PC-3 (cell line): ENCODE measurements at regions of chr10 and their contacts with region 1.

Region 1: DNA sequence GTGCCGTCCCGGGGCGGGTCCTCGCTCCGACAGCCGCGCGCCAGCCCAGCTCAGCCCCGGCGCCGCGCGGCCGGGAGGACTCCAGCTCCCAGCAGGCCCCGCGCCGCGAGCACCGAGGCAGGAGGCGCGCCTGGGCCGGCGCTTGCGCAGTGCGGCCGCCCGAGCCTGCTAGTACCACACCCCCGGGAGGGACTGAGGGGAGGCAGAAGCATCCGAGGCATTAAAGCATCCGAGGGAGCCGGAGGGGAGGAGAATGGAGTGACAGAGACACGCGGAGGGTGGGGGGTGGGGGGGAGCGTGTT is at the start of gene GRK5:
- DNase-seq: peak; percentile 93
- ATAC-seq: peak; percentile 77
- H3K4me3 ChIP-seq: peak within 1 kb of the TSS; percentile 78
- H3K27ac ChIP-seq: peak within 1 kb of the TSS; percentile 56
- H3K4me1 ChIP-seq: peaks cover 43% of the 10 kb centered on the region
- H3K27me3 ChIP-seq: no peaks in the 10 kb centered on the region
- CTCF ChIP-seq: no peak
- total RNA-seq, gene GRK5: 4.5 and 5.0 TPM in 2 replicates

Region 2: DNA sequence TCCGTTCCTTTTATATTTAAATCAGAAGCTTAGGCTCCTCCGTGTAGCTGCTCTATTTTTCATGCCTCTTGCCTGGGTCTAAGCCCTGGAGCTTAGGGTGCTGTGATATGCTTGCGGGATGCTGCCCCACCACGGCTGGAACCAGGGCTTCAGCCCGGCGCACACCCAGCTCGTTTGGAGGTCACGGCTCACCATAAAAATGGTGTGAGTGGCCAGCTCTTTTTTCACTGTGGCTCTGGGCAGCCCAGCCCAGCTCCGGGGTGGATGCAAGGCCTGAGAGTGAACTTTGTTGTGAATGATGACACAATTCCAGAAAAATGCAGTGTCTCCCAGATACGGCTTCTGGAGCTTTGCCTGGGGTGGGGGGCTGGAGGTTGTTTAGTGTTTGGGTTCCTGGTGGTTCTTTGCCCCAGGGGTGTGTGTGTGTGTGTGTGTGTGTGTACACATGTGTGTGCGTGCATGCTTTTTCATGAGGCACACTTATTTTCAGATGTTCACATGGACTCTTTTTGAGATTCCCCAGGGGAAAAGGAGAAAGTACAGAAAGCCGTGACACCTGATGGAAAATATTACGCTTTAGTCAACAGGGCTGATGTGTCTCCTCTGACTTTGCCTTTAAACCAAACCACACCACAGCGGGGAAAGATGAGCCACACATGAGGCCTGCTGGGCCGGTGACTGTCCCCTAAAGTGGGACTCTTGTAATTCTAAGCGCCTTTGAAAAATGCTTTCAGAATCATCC is 46.3 kb after region 1 on chr10:
- CTCF ChIA-PET with region 1: interaction called, 11 read pairs
- POLR2A ChIA-PET with region 1: no interaction called
- intact Hi-C with region 1: loop called (anchors 1 kb)
- DNase-seq: peak; percentile 87
- ATAC-seq: peak; percentile 83
- H3K4me3 ChIP-seq: peak overlapping the region; percentile 41; the same call in 1 of the 2 replicates
- H3K27ac ChIP-seq: peak overlapping the region; percentile 96
- H3K4me1 ChIP-seq: peaks cover 51% of the 10 kb centered on the region
- H3K27me3 ChIP-seq: no peaks in the 10 kb centered on the region
- CTCF ChIP-seq: no peak; the same call in 1 of the 2 replicates

Region 3: DNA sequence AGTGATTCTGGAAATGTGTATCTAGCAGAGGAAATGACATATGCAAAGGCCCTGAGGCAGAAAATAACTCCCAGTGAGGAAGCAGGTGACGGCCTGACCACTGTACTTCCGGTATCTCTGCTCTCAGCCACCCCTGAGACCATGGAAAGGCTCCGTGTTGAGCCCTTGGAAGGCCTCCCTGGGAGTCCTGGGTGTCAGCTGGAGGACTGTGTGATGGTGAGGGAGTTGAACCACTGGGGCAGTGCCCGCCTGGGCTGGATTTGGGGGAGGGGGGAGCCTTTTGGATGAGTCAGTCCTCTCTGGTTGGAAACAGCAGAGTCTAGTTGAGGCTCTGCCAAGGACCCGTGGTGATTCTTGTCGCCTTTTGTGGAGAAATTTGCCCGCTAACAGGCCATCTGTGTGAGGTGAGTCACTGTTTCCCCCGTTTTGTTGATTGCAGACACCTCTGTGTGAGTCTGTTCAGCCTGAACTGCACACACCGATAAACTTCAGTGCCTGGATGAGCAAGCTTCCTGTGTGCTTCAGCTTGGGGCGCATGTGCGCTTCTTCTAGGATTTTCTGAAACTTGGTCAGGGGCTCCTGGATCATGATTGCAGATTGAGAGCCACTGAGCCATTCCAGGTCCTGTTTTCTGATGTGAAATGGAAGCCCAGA is 98.7 kb after region 1 on chr10:
- CTCF ChIA-PET with region 1: interaction called, 5 read pairs
- POLR2A ChIA-PET with region 1: no interaction called
- intact Hi-C with region 1: loop called (anchors 2 kb)
- DNase-seq: peak; percentile 89
- ATAC-seq: peak; percentile 88
- H3K4me3 ChIP-seq: no peak overlapping the region; the same call in 1 of the 2 replicates
- H3K27ac ChIP-seq: peak overlapping the region; percentile 65
- H3K4me1 ChIP-seq: peaks cover 58% of the 10 kb centered on the region
- H3K27me3 ChIP-seq: no peaks in the 10 kb centered on the region
- CTCF ChIP-seq: no peak

Region 4: DNA sequence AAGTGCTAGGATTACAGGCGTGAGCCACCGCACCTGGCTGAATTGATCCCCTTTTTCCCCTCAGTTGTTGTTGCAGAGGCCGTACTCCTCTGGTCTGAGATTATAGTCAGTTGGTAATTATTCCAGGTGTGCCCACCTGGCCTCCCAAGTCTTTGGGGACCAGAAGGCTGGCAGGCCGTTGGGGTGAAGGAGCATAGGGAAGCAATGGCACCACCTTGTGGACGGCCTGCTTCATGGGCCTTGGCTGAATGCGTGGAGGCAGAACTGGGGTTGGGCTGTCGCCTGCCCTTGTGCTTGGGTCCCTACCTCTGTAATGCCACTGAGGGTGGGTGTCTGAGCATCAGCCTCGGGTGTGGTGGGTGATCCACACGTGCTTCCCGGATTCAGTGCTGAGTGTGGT is 209.5 kb after region 1 on chr10:
- CTCF ChIA-PET with region 1: no interaction called
- POLR2A ChIA-PET with region 1: no interaction called
- intact Hi-C with region 1: loop called (anchors 2 kb)
- DNase-seq: peak; percentile 58
- ATAC-seq: peak; percentile 83
- H3K4me3 ChIP-seq: no peak overlapping the region
- H3K27ac ChIP-seq: no peak overlapping the region
- H3K4me1 ChIP-seq: no peaks in the 10 kb centered on the region
- H3K27me3 ChIP-seq: no peaks in the 10 kb centered on the region
- CTCF ChIP-seq: peak; percentile 74

Region 5: DNA sequence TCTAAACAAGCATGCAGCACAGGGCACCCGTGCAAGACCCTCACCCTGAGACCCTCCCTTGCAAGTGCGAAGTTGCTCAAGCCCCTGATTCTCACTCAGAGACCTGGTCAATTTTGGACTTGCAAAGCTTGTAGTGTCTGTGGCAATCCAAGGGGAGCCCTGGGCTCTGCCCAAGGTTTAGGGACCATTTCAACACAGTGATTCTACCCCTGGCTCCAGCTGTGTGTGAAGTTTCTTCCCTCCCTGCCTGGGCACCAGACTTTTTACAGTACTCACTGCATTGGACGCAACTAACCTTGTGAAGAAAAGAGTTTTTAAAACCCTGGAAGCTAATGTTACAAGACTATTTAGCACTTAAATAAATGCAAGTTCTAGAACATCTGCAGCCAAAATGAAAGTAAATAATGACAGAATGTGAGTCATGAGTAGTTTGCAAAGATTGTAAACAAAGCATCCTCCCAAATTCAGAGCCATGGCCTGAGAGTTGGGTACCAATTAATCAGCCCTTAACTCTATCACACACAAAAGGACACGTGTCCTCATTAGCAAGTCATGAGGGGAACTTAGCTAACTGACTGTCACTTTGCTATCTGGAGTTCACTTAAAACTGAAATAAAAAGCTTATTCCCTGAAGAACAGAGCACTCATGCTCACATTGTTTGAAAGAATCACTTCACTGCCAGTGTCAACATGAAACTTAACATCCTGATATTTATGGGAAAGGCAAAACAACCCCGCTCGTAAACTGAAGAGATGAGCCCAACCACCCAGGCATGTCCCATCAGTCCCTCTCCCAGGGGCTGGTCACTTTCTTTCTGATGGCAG is 287.1 kb after region 1 on chr10:
- CTCF ChIA-PET with region 1: no interaction called
- POLR2A ChIA-PET with region 1: no interaction called
- intact Hi-C with region 1: loop called (anchors 5 kb)
- DNase-seq: peak; percentile 67
- ATAC-seq: peak; percentile 79
- H3K4me3 ChIP-seq: no peak overlapping the region
- H3K27ac ChIP-seq: peak overlapping the region; percentile 70
- H3K4me1 ChIP-seq: peaks cover 18% of the 10 kb centered on the region
- H3K27me3 ChIP-seq: no peaks in the 10 kb centered on the region
- CTCF ChIP-seq: no peak